MCF 10A (cell line): ENCODE measurements at regions of chr12 and their contacts with region 1.

Region 1: GRCh38 chr12:81257947-81258551 is 180.2 kb downstream of the ACSS3 start:
- DNase-seq: peak; percentile 55
- H3K4me3 Mint-ChIP-seq: no peak overlapping the region
- H3K27ac Mint-ChIP-seq: no peak overlapping the region
- H3K4me1 Mint-ChIP-seq: no peaks in the 10 kb centered on the region
- H3K27me3 Mint-ChIP-seq: peaks cover 76% of the 10 kb centered on the region
- CTCF ChIP-seq: peak; percentile 46

Region 2: GRCh38 chr12:80412369-80412953 is 845.6 kb before region 1 on chr12:
- CTCF ChIA-PET with region 1: interaction called, 3 read pairs
- POLR2A ChIA-PET with region 1: no interaction called
- intact Hi-C with region 1: loop called (anchors 5 kb)
- DNase-seq: peak; percentile 66
- H3K4me3 Mint-ChIP-seq: no peak overlapping the region
- H3K27ac Mint-ChIP-seq: no peak overlapping the region
- H3K4me1 Mint-ChIP-seq: no peaks in the 10 kb centered on the region
- H3K27me3 Mint-ChIP-seq: peaks cover 67% of the 10 kb centered on the region
- CTCF ChIP-seq: peak; percentile 66

Region 3: GRCh38 chr12:80472902-80473500 is 785.0 kb before region 1 on chr12:
- CTCF ChIA-PET with region 1: interaction called, 4 read pairs
- POLR2A ChIA-PET with region 1: no interaction called
- intact Hi-C with region 1: loop called (anchors 2 kb)
- DNase-seq: peak; percentile 60
- H3K4me3 Mint-ChIP-seq: no peak overlapping the region
- H3K27ac Mint-ChIP-seq: no peak overlapping the region
- H3K4me1 Mint-ChIP-seq: no peaks in the 10 kb centered on the region
- H3K27me3 Mint-ChIP-seq: no peaks in the 10 kb centered on the region
- CTCF ChIP-seq: peak; percentile 39

Region 4: DNA sequence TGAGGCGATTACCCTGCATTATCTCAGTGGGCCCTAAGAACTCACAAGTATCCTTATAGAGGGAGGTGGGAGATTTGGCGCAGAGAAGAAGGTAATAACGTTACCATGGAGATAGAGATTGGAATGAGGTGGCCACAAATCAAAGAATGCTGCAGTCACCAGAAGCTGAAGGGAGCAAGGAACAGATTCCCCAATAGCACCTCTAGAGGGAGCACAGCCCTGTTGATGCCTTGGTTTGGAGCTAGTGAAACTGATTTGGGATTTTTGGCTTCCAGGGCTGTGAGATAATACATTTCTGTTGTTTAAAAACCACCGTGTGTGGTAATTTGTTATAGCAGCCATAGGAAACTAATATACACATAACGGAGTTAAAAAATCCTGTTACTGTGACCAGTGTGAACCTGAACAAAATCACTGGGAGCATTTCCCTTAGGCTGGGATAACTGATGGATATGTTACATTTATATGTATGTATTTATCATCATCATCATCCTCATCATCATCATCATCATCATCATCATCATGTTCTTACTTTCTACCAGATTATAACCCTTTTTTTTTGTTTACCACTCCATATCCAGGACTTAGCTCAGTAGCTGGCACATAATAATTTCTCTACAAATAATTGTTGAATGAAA is 420.6 kb before region 1 on chr12:
- CTCF ChIA-PET with region 1: interaction called, 7 read pairs
- POLR2A ChIA-PET with region 1: no interaction called
- intact Hi-C with region 1: loop called (anchors 2 kb)
- DNase-seq: peak; percentile 61
- H3K4me3 Mint-ChIP-seq: no peak overlapping the region
- H3K27ac Mint-ChIP-seq: no peak overlapping the region
- H3K4me1 Mint-ChIP-seq: no peaks in the 10 kb centered on the region
- H3K27me3 Mint-ChIP-seq: peaks cover 60% of the 10 kb centered on the region
- CTCF ChIP-seq: peak; percentile 73

Region 5: DNA sequence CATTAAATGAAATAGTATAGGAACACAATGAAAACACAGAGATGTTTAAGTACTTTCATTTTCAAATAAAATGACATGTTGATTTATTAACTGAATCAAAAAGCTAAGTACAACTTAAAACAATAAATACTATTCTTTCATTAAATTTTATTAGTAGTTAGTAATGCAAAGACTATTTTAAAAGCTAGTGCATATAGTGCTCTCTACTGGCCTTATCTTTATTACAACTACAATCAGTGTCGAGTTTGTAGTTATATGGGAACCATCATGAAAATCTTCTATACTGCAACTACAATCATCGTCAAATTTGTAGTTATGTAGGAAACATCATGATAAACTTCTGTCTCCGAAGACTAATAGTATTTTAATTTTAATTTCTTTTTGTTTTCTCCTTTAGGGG is 311.5 kb before region 1 on chr12:
- CTCF ChIA-PET with region 1: no interaction called
- POLR2A ChIA-PET with region 1: no interaction called
- intact Hi-C with region 1: loop called (anchors 5 kb)
- DNase-seq: no peak
- H3K4me3 Mint-ChIP-seq: no peak overlapping the region
- H3K27ac Mint-ChIP-seq: no peak overlapping the region
- H3K4me1 Mint-ChIP-seq: no peaks in the 10 kb centered on the region
- H3K27me3 Mint-ChIP-seq: peaks cover 28% of the 10 kb centered on the region
- CTCF ChIP-seq: peak; percentile 5

Region 6: GRCh38 chr12:81114226-81114625 is 143.8 kb before region 1 on chr12:
- CTCF ChIA-PET with region 1: no interaction called
- POLR2A ChIA-PET with region 1: no interaction called
- intact Hi-C with region 1: no loop called
- DNase-seq: no peak
- H3K4me3 Mint-ChIP-seq: no peak overlapping the region
- H3K27ac Mint-ChIP-seq: no peak overlapping the region
- H3K4me1 Mint-ChIP-seq: no peaks in the 10 kb centered on the region
- H3K27me3 Mint-ChIP-seq: peaks cover 8% of the 10 kb centered on the region
- CTCF ChIP-seq: no peak

Region 7: DNA sequence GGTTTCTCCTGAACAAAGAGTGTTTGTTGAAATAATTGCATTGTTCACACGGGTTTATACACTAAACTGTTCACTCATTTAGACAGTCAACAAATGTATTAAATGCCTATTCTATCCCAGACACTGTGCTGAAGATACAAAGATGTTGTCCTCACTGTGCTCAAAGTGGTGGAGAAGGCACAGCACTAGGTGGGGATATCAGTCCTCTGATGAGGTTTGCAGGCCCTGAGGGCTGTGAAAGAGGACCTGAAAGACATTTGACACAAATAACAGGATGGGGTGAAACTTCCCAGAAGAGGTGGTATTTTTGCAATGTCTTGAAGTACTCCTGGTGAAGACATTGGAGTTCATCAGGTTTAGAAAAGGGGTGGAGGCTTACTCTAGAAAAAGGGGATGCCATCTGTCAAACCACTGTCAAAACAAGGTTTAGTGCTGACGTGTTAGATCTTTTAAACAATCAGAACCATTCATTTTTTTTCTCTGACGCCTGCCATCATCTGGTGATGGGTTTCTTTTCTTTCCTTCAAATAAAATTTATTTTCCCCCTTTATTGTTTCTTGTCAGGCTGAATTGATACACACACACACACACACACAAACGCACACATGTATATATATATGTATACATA is 110.6 kb before region 1 on chr12:
- CTCF ChIA-PET with region 1: no interaction called
- POLR2A ChIA-PET with region 1: no interaction called
- intact Hi-C with region 1: loop called (anchors 10 kb)
- DNase-seq: no peak
- H3K4me3 Mint-ChIP-seq: no peak overlapping the region
- H3K27ac Mint-ChIP-seq: no peak overlapping the region
- H3K4me1 Mint-ChIP-seq: no peaks in the 10 kb centered on the region
- H3K27me3 Mint-ChIP-seq: no peaks in the 10 kb centered on the region
- CTCF ChIP-seq: no peak

Region 8: GRCh38 chr12:81369175-81369574 is 111.1 kb after region 1 on chr12:
- CTCF ChIA-PET with region 1: no interaction called
- POLR2A ChIA-PET with region 1: no interaction called
- intact Hi-C with region 1: no loop called
- DNase-seq: no peak
- H3K4me3 Mint-ChIP-seq: no peak overlapping the region
- H3K27ac Mint-ChIP-seq: no peak overlapping the region
- H3K4me1 Mint-ChIP-seq: peaks cover 6% of the 10 kb centered on the region
- H3K27me3 Mint-ChIP-seq: peaks cover 19% of the 10 kb centered on the region
- CTCF ChIP-seq: no peak